ENCODE measurements at regions of chr10 and their contacts with region 1.

Region 1: GRCh38 chr10:122565728-122566206 is 5.2 kb downstream of the DMBT1 start:
- DNase-seq: peak; percentile 64 to 79 (median 69)
- ATAC-seq: peak; percentile 78 to 93 (median 88)
- H3K4me3 ChIP-seq: peak overlapping the region in 1 of 3 donors; percentile 3
- H3K27ac ChIP-seq: no peak overlapping the region
- H3K4me1 ChIP-seq: no peaks in the 10 kb centered on the region
- H3K27me3 ChIP-seq: no peaks in the 10 kb centered on the region
- CTCF ChIP-seq: peak; percentile 84 to 88 (median 86)
- POLR2A ChIP-seq: no peak

Region 2: GRCh38 chr10:122298598-122299301 is 267.0 kb before region 1 on chr10:
- intact Hi-C with region 1: loop called in 1 of 2 experiments (anchors 10 kb)
- DNase-seq: peak; percentile 69 to 71 (median 70)
- ATAC-seq: peak; percentile 89 to 93 (median 92)
- H3K4me3 ChIP-seq: peak overlapping the region; percentile 25 to 47 (median 40)
- H3K27ac ChIP-seq: peak overlapping the region; percentile 12 to 84 (median 44)
- H3K4me1 ChIP-seq: peaks cover 0 to 19% (median 6%) of the 10 kb centered on the region in 4 donors
- H3K27me3 ChIP-seq: no peaks in the 10 kb centered on the region
- CTCF ChIP-seq: peak; percentile 85 to 96 (median 88)
- POLR2A ChIP-seq: peak; percentile 35

Region 3: DNA sequence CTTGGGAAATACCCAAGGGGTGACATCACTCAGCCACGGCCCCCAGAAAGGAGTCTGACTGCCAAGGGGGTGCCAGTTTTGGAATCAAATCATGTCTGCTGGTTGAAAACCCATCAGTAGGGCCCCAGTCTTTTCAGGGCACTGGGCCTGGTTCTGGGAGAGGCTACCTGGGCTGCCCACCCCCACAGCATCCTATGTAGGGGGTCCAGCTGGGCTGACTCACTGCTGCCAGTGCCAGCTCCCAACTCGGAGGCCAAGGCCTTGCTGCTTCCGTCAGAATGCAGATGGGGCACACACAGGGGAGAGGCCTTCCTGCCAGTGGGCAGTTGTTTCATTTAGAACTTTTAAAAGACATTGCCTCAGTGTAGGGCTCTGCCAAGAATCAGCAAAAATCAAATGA is 44.8 kb before region 1 on chr10:
- intact Hi-C with region 1: loop called (anchors 5 kb)
- DNase-seq: peak in 1 of 3 donors; percentile 16
- ATAC-seq: no peak
- H3K4me3 ChIP-seq: no peak overlapping the region
- H3K27ac ChIP-seq: no peak overlapping the region
- H3K4me1 ChIP-seq: peaks cover 0 to under 1% (median 0%) of the 10 kb centered on the region in 4 donors
- H3K27me3 ChIP-seq: no peaks in the 10 kb centered on the region
- CTCF ChIP-seq: no peak
- POLR2A ChIP-seq: no peak

Region 4: DNA sequence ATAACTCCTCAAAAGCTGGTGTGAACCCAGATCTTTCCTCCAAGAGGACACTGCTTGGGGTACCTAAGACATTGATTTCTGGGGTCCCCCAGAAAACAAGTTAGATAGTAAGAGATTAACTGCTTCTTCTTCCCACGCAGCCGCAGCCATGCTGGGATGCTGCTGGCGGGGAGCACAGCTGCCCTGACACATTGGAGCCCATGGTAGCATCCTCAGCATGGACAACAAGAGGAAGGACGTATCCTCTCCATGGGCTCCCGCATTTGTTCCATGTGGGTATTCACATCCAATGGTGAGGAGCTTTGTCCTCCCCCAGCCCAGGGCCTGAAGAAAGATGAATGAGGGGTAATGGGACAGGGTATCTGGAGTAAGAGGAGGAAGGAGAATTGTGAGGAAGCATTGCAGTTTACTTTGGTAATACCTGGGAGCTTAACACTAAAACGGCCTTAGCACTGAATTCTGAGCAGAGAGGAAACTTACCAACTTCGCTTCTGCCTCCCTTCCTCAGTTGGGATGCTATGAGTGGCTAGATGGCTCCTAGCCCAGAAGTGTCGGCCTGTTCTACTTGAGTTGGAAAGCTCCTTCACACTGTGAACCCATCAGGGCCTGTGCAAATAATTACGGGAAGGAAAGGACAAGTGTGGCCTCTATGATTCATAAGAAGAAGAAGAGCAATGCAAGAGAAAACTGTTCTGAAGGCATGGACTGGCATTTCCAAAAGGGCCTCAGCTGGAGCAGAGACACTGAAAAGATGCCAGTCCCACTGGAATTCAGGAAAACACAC is 89.9 kb after region 1 on chr10:
- intact Hi-C with region 1: no loop called
- DNase-seq: no peak
- ATAC-seq: no peak
- H3K4me3 ChIP-seq: no peak overlapping the region
- H3K27ac ChIP-seq: no peak overlapping the region
- H3K4me1 ChIP-seq: no peaks in the 10 kb centered on the region
- H3K27me3 ChIP-seq: no peaks in the 10 kb centered on the region
- CTCF ChIP-seq: no peak
- POLR2A ChIP-seq: no peak

Measured in right lobe of liver (tissue), 6 donors.